ENCODE measurements at regions of chr11 and their contacts with region 1.

Region 1: DNA sequence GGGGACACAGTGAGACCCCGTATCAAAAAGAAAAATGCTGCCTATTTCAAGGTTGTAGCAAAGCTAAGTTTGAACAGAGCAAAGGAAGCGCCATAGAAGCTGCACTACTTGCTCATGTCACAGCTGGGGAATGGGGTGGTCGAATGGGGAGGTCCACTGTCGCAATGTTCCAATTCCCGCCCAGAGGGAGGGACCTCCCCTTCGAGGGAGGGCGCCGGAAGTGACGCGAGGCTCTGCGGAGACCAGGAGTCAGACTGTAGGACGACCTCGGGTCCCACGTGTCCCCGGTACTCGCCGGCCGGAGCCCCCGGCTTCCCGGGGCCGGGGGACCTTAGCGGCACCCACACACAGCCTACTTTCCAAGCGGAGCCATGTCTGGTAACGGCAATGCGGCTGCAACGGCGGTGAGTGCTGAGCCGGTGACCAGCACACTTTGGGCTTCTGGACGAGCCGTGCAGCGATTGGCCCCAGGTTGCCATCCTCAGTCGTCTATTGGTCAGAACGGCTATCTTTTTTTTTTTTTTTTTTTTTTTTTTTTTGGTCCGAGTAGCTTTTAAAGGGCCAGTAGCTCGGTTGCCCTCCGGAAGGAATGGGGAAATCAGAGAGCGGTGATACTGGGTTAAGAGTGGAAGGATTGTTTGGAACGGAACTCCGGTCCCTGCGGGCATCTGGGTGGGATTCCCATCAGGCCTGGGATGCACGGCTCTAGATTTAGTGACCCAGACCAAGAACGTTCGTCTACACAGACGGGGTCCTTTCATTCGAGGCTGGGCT is at the start of gene HMBS:
- DNase-seq: peak; percentile 81
- H3K4me3 ChIP-seq: peak within 1 kb of the TSS; percentile 85
- H3K27ac ChIP-seq: peak within 1 kb of the TSS; percentile 83
- H3K27me3 ChIP-seq: no peaks in the 10 kb centered on the region
- CTCF ChIP-seq: no peak
- polyA plus RNA-seq, gene HMBS: 38.5 and 43.3 TPM in 2 replicates

Region 2: DNA sequence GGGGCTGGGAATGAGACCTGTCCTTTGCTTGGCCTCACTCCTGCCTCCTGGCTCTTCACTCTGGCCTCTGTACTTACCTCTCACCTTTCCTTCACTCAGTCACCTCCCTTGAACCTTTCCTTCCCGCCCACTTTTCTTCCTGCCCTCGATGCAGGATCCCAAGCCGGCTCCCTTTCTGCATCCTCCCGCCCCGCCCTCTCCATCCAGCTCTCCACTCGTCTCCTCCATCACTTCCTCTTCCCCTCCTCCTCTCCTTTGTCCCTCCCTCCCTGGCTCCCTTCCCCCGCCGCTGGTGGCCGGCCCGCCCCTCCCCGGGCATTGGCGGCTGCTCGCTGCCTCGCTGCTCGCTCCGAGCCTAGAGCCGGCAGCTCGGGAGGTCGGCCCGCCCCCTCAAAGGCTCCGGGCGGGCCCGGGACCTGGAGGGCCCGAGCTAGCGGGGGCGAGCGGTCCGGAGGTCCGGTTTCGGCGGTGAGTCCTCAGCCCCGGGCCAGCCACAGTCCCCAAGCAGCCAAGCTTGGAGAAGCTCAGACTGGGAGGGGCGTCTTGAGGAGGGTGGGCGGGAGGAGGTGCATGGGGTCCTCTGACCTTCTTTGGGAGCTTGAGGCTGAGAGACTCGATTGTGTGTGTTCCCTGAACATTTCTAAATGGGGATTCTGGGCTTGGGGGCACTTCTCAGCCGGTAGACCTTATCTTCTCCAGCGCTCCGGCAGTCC is 463.6 kb before region 1 on chr11:
- CTCF ChIA-PET with region 1: interaction called, 10 read pairs
- POLR2A ChIA-PET with region 1: no interaction called
- DNase-seq: no peak
- H3K4me3 ChIP-seq: peak overlapping the region; percentile 85
- H3K27ac ChIP-seq: peak overlapping the region; percentile 86
- H3K27me3 ChIP-seq: no peaks in the 10 kb centered on the region
- CTCF ChIP-seq: no peak

Region 3: GRCh38 chr11:119057000-119057769 is 27.7 kb before region 1 on chr11 and contains the start of gene HYOU1:
- CTCF ChIA-PET with region 1: no interaction called
- POLR2A ChIA-PET with region 1: interaction called, 13 read pairs
- DNase-seq: peak; percentile 86
- H3K4me3 ChIP-seq: peak within 1 kb of the TSS; percentile 83
- H3K27ac ChIP-seq: peak within 1 kb of the TSS; percentile 77
- H3K27me3 ChIP-seq: no peaks in the 10 kb centered on the region
- CTCF ChIP-seq: peak; percentile 39
- polyA plus RNA-seq, gene HYOU1: 123 and 144 TPM in 2 replicates

Region 4: DNA sequence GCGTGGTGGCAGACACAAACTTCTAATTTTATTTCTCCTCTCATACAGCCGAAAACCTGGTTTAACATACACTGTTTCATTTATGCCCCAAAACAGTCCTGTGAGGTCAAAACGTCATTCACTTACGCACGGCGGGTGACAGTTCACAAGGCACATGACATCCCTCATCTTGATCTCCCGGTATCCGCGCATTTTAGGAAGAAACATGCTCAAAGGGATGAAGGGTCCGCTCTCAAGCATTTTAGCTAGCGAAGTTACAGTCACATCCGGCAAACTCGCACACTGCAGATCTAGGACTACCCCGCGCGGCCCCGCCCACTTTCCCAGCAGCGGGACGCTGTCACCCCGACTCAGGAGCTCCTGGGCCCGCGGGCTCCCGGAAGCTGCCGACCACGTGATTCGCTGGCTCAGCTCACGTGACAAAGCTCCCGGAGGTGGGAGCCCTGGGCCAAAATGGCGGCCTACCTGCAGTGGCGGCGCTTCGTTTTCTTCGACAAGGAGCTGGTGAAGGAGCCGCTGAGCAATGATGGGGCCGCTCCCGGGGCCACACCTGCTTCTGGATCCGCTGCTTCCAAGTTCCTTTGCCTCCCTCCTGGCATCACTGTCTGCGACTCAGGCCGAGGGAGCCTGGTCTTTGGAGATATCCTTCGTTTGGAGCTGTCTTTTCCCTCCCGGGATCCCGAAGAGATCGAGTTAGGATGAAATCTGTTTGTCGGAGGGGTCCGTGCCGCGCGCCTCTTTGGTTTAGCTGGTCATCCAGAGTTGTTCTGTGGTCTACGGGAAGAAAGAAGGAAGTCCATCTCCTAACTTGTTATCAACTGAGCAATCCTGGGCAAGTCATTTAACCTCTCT is 17.3 kb before region 1 on chr11 and contains the start of gene VPS11:
- CTCF ChIA-PET with region 1: interaction called, 3 read pairs
- POLR2A ChIA-PET with region 1: interaction called, 18 read pairs
- DNase-seq: peak; percentile 92
- H3K4me3 ChIP-seq: peak within 1 kb of the TSS; percentile 99
- H3K27ac ChIP-seq: peak within 1 kb of the TSS; percentile 88
- H3K27me3 ChIP-seq: no peaks in the 10 kb centered on the region
- CTCF ChIP-seq: no peak
- polyA plus RNA-seq, gene VPS11: 9.9 and 19.9 TPM in 2 replicates

Region 5: GRCh38 chr11:119095066-119095880 is 10.4 kb after region 1 on chr11:
- CTCF ChIA-PET with region 1: interaction called, 3 read pairs
- POLR2A ChIA-PET with region 1: interaction called, 49 read pairs
- DNase-seq: peak; percentile 100
- H3K4me3 ChIP-seq: peak overlapping the region; percentile 76
- H3K27ac ChIP-seq: peak overlapping the region; percentile 70
- H3K27me3 ChIP-seq: no peaks in the 10 kb centered on the region
- CTCF ChIP-seq: no peak

Region 6: GRCh38 chr11:119101759-119102423 is 17.0 kb after region 1 on chr11 and contains the start of gene DPAGT1:
- CTCF ChIA-PET with region 1: interaction called, 3 read pairs
- POLR2A ChIA-PET with region 1: interaction called, 21 read pairs
- DNase-seq: peak; percentile 91
- H3K4me3 ChIP-seq: peak within 1 kb of the TSS; percentile 87
- H3K27ac ChIP-seq: peak within 1 kb of the TSS; percentile 93
- H3K27me3 ChIP-seq: no peaks in the 10 kb centered on the region
- CTCF ChIP-seq: no peak
- polyA plus RNA-seq, gene DPAGT1: 59.2 and 62.5 TPM in 2 replicates

Region 7: DNA sequence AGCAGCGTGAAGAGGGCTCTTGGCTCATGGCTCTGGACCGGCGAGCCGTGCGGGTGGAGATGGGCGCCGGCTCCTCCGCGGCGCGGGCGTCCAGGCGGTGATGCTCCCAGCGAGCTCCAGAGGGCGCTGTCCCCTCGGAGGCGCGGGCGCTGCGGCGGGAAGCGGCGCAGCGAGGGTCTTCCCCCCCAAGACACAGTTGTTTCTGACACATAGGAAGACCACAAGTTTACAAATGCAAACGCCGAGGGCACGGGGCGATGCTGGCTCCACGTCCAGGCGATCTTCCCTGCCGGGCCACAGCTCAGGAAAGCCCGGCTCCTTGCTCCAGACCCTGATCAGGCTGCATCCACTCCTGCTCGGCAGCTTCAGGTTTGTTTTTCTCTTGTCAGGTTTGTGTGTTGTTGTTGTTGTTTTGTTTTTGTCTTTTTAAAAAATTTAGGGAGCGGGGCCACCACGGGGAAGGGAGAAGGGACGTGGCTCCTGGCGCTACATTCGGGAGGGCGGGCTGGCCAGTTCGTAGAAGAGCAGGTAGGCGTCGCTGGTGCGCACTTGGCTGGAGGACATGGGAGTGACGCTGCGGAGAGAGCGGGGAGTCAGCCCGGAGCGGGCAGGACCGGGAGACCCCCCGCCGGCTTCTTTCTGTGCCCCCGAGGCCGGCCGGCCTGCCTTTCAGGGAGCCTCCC is 271.6 kb after region 1 on chr11:
- CTCF ChIA-PET with region 1: interaction called, 14 read pairs
- POLR2A ChIA-PET with region 1: no interaction called
- DNase-seq: no peak
- H3K4me3 ChIP-seq: peak overlapping the region; percentile 66
- H3K27ac ChIP-seq: no peak overlapping the region
- H3K27me3 ChIP-seq: peaks cover 20% of the 10 kb centered on the region
- CTCF ChIP-seq: peak; percentile 80